Left lung (tissue), 14 donors: ENCODE measurements at regions of chr6 and their contacts with region 1.

Region 1: DNA sequence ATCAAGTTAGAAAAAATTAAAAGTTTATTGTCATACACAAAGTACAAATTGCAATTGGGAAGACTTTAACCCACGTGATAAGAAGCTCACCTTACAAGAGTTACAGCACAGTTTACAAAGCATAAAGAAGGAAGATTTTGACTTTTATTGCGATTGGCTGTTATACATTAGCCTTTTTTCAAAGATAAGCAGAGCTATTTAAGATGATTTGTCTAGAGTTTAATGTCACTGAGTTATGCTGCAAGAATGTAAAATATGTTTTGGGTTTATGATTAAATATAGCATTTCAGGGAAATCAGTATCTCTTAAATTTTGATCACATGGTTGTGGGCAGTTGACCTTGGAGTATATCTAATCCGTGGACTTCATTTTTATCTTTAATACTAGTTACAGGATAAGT is 664.2 kb upstream of the PTCHD4 start:
- DNase-seq: no peak
- ATAC-seq: no peak
- H3K4me3 ChIP-seq: no peak overlapping the region
- H3K27ac ChIP-seq: no peak overlapping the region
- H3K4me1 ChIP-seq: no peaks in the 10 kb centered on the region
- H3K27me3 ChIP-seq: no peaks in the 10 kb centered on the region
- CTCF ChIP-seq: no peak

Region 2: GRCh38 chr6:47792216-47792733 is 982.9 kb before region 1 on chr6:
- intact Hi-C with region 1: loop called in 1 of 2 experiments (anchors 10 kb)
- DNase-seq: no peak
- ATAC-seq: no peak
- H3K4me3 ChIP-seq: no peak overlapping the region
- H3K27ac ChIP-seq: no peak overlapping the region
- H3K4me1 ChIP-seq: peaks cover 0 to 6% of the 10 kb centered on the region in 2 donors
- H3K27me3 ChIP-seq: no peaks in the 10 kb centered on the region
- CTCF ChIP-seq: no peak

Region 3: GRCh38 chr6:48426636-48427035 is 348.5 kb before region 1 on chr6:
- intact Hi-C with region 1: no loop called
- DNase-seq: no peak
- ATAC-seq: no peak
- H3K4me3 ChIP-seq: no peak overlapping the region
- H3K27ac ChIP-seq: no peak overlapping the region
- H3K4me1 ChIP-seq: no peaks in the 10 kb centered on the region
- H3K27me3 ChIP-seq: no peaks in the 10 kb centered on the region
- CTCF ChIP-seq: no peak